AG04449 (cell line): ENCODE measurements at regions of chr6 and their contacts with region 1.

Region 1: GRCh38 chr6:53651764-53652401 is 13.7 kb downstream of the KLHL31 start:
- DNase-seq: no peak
- H3K4me3 ChIP-seq: peak overlapping the region; percentile 71
- CTCF ChIP-seq: peak; percentile 37

Region 2: GRCh38 chr6:53524455-53524815 is 127.4 kb before region 1 on chr6:
- CTCF ChIA-PET with region 1: interaction called, 13 read pairs
- POLR2A ChIA-PET with region 1: no interaction called
- DNase-seq: peak; percentile 45
- H3K4me3 ChIP-seq: no peak overlapping the region
- CTCF ChIP-seq: no peak

Region 3: DNA sequence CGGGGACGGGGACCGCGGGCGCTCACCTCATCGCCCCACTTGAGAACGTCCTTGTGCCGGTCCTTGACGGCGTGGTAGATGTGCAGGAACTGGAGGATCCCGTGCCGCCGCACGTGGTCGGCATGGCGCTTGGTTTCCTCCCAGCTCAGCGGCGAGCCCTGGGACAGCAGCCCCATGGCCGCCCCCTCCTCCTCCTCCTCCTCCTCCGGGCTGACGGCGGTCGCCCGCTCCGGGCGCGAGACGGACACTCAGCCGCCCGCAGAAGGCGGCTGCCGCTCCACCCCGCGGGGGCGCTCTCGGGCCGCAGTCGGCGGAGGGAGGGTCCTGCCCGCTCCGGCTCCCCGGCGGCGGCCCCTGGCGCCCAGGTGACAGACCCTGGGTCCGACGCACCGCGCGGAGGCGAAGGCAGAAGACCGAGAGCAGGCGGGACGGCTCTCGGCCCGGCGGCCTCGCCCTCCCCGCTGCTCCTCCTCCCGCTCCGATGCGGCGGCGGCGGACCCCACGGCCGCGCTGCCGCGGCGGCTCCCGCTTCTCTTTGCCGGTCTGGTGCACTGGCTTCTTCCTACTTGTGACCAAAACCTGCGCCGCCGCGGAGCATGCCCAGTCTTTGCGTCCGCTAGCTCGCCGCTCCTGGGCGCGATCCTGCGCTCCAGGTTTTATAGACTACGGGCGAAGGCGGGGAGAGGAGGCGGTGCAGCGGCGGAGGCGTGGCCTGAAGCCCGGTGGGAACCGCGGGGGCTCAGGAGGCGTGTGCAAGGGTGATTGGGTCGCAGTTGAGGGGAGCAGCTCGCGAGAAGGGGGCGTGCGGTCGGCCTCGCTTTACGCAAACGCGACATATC is 107.2 kb before region 1 on chr6 and contains the start of gene GCLC:
- CTCF ChIA-PET with region 1: interaction called, 13 read pairs
- POLR2A ChIA-PET with region 1: no interaction called
- DNase-seq: peak; percentile 71
- H3K4me3 ChIP-seq: peak within 1 kb of the TSS; percentile 85
- CTCF ChIP-seq: peak; percentile 66

Region 4: DNA sequence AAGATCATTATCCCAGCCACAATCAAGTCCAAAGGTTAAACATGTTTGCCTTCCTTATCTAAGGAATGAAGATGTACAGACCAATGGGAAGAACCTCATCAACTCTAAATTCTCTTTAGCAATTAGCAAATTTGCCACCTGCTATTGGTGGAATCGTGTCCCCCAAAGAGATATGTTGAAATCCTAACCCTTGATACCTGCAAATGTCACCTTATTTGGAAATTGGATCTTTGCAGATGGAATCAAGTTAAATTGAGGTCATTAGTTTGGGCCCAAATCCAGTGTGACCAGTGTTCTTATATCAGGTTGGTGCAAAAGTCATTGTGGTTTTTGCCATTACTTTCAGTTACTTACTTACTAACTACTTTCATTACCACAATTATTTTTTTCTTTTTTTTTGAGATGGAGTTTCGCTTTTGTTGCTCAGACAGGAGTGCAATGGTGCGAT is 17.7 kb before region 1 on chr6:
- CTCF ChIA-PET with region 1: interaction called, 19 read pairs
- POLR2A ChIA-PET with region 1: no interaction called
- DNase-seq: no peak
- H3K4me3 ChIP-seq: no peak overlapping the region
- CTCF ChIP-seq: no peak

Region 5: GRCh38 chr6:53986165-53986720 is 334.4 kb after region 1 on chr6:
- CTCF ChIA-PET with region 1: no interaction called
- POLR2A ChIA-PET with region 1: no interaction called
- DNase-seq: no peak
- H3K4me3 ChIP-seq: no peak overlapping the region
- CTCF ChIP-seq: peak; percentile 68